ENCODE measurements at regions of chr3 and their contacts with region 1.

Region 1: DNA sequence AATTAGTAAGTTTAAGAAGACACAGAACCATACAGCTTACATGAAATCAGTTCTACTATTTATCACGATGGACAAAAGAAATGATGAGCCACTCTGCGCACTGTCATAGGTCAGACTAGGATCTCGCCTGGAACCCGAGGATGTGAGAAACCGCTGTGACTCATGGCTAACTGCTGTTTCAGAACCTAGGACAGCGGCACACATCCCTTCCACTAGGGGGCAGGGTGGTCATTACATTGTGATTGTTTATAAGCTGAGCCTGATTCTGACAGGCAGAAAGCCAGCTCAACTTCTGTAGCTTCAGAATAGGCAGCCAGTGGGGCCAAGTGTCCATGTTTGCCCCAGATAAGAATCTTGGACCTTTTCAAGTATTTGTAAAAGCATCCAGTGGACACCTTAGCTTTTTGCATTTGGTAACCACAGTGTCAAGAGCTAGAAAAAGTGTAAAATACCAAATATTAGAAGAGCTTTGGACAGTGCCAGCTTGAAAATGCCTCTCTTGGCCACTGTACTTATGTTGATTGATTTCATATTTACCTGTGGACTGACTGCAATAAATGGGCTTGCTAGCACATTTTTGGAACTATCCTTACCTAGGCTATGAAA is 115.8 kb downstream of the KBTBD8 start:
- DNase-seq: peak; percentile 70
- H3K4me3 ChIP-seq: no peak overlapping the region
- H3K27ac ChIP-seq: no peak overlapping the region
- H3K27me3 ChIP-seq: no peaks in the 10 kb centered on the region
- CTCF ChIP-seq: peak; percentile 97

Region 2: DNA sequence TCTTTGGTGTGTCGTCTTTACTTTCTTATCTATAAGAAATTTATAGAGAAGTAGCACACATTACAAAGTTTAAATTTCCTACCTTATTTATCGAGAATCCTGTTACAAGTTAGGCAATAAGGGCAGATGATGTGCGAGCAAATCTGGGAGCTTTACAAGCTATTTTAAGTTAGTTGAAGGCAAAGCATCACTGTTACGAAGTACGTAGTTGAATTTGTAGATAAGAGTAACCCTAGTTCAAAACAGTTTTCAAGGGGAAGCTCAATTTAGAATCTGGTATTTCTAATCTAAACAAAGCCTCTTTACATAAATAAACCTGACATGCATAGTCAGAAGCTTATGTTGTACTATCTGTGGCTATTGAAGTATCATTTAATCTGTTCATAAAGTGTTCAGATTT is 107.4 kb before region 1 on chr3:
- CTCF ChIA-PET with region 1: interaction called, 17 read pairs
- POLR2A ChIA-PET with region 1: no interaction called
- DNase-seq: peak; percentile 75
- H3K4me3 ChIP-seq: no peak overlapping the region
- H3K27ac ChIP-seq: no peak overlapping the region
- H3K27me3 ChIP-seq: no peaks in the 10 kb centered on the region
- CTCF ChIP-seq: no peak

Region 3: DNA sequence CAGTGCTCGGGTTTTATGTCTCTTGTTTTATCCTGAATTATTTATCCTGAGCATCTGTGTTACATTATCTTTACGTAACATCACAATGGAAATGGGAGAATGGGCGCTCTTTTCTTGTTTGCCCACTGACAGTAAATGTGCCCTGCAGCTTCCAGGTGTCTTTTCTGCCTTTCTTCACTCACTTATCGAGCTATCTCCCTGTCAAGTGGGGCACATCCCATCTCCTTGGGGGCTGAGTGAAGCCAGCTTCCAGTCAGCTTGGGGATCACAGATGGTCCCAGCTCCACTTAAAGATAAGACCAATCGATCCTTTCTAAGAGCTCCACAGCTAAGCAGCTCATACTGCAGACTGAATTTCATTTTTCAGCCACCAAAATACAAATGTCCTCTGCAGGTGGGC is 10.0 kb after region 1 on chr3:
- CTCF ChIA-PET with region 1: interaction called, 16 read pairs
- POLR2A ChIA-PET with region 1: no interaction called
- DNase-seq: no peak
- H3K4me3 ChIP-seq: no peak overlapping the region
- H3K27ac ChIP-seq: no peak overlapping the region
- H3K27me3 ChIP-seq: no peaks in the 10 kb centered on the region
- CTCF ChIP-seq: no peak

Region 4: DNA sequence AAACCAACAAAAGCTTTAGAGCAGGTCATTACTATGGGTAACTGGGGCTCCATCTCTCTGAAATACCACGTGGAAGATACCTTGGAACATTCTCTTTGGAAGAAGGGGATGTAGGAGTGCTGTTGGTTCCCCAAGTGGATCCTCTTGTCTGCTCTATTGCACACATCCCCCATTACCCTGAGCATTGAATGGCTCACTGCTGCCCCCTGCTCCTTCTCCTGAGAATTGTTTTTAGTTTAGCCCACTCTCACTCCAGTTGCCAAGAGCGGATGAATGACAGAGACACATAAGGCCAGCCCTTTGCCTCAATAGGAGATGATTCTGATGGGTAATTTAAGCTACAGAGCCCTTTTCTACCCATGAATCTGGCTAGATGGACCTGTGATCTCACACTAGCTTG is 676.1 kb after region 1 on chr3:
- CTCF ChIA-PET with region 1: interaction called, 33 read pairs
- POLR2A ChIA-PET with region 1: no interaction called
- DNase-seq: peak; percentile 10
- H3K4me3 ChIP-seq: no peak overlapping the region
- H3K27ac ChIP-seq: no peak overlapping the region
- H3K27me3 ChIP-seq: no peaks in the 10 kb centered on the region
- CTCF ChIP-seq: peak; percentile 79